ENCODE measurements at regions of chr14 and their contacts with region 1.

Region 1: GRCh38 chr14:49892636-49893308 is at the start of gene ARF6:
- DNase-seq: peak; percentile 98
- H3K4me3 Mint-ChIP-seq: peak within 1 kb of the TSS; percentile 100
- H3K27ac Mint-ChIP-seq: peak within 1 kb of the TSS; percentile 100
- H3K4me1 Mint-ChIP-seq: peaks cover 19% of the 10 kb centered on the region
- H3K27me3 Mint-ChIP-seq: no peaks in the 10 kb centered on the region
- total RNA-seq, gene ARF6: 128 to 129 TPM

Region 2: DNA sequence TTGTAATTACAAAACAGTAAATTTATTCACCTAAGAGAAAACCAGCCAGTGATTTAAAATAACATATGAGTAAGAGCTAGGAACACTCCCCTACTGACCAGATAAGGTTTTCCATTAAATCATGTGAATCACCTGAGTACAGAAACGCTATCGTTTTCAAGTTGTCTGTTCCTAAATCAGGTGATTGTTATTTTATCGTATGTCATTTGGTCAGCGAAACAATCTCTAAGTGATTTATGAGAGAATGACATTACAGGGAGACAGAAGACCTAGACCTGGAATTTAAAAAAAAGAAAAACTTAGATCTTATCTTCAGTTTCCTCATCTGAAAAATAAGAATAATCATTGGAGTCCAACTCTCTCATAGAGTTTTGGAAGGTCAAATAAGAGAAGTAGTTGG is 353.8 kb before region 1 on chr14:
- CTCF ChIA-PET with region 1: no interaction called
- intact Hi-C with region 1: no loop called
- DNase-seq: no peak
- H3K4me3 Mint-ChIP-seq: no peak overlapping the region
- H3K27ac Mint-ChIP-seq: no peak overlapping the region
- H3K4me1 Mint-ChIP-seq: no peaks in the 10 kb centered on the region
- H3K27me3 Mint-ChIP-seq: no peaks in the 10 kb centered on the region

Region 3: GRCh38 chr14:49879683-49880204 is 13.0 kb before region 1 on chr14:
- CTCF ChIA-PET with region 1: interaction called, 11 read pairs
- intact Hi-C with region 1: loop called (anchors 1 kb)
- DNase-seq: peak; percentile 79
- H3K4me3 Mint-ChIP-seq: no peak overlapping the region
- H3K27ac Mint-ChIP-seq: peak overlapping the region; percentile 30
- H3K4me1 Mint-ChIP-seq: peaks cover 17% of the 10 kb centered on the region
- H3K27me3 Mint-ChIP-seq: no peaks in the 10 kb centered on the region

Region 4: DNA sequence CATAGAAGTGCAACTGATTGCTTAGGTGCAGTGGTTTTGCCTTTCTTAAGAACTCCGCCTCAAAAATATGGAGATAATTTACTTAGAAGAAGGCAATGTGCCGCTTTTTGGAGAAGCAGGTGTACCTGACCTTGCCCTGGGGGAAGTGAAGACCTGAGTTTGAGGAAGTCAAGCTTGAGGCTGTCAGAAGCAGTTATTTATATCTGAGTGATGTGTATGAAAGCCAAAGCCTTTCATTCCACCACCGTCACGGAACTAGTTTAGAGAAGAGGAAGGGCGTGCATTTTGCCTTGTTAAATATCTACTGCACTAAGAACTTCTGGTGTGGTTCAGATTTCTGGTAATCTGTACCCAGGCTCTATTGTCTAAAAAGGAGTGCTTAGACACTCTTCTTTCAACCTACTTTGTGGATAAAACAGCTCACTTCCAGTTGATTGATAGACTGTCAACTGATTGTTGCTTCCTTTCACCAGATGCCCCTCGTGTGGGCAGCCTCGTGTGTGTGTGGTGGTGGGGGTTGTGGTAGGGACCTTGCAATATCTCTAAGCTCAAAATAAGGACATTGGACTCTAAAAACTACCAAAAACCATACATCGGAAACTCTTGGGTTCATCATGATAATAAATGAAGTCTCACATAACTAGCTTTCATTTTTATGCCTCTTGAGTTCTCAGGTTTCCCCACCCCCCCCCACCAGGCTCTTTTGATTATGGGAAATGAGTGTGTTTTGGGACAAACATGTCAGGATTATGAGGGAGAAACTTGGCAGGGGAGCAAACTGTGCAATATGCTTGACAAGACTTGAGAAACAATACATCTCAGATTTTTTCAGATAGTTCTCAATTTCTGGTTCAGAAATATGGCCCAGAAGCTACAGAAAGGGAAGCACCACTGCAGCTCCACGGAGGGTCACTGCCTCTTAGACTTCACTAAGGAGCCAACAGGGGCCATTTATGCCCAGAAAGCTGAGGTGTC is 78.7 kb after region 1 on chr14:
- CTCF ChIA-PET with region 1: interaction called, 5 read pairs
- intact Hi-C with region 1: loop called (anchors 1 kb)
- DNase-seq: peak; percentile 69
- H3K4me3 Mint-ChIP-seq: peak overlapping the region; percentile 73
- H3K27ac Mint-ChIP-seq: peak overlapping the region; percentile 97
- H3K4me1 Mint-ChIP-seq: peaks cover 59% of the 10 kb centered on the region
- H3K27me3 Mint-ChIP-seq: no peaks in the 10 kb centered on the region

Region 5: GRCh38 chr14:50018201-50018932 is 125.6 kb after region 1 on chr14:
- CTCF ChIA-PET with region 1: no interaction called
- intact Hi-C with region 1: no loop called
- DNase-seq: no peak
- H3K4me3 Mint-ChIP-seq: no peak overlapping the region
- H3K27ac Mint-ChIP-seq: no peak overlapping the region
- H3K4me1 Mint-ChIP-seq: peaks cover 49% of the 10 kb centered on the region
- H3K27me3 Mint-ChIP-seq: no peaks in the 10 kb centered on the region

Region 6: GRCh38 chr14:50109342-50109741 is 216.6 kb after region 1 on chr14:
- CTCF ChIA-PET with region 1: interaction called, 4 read pairs
- intact Hi-C with region 1: loop called (anchors 2 kb)
- DNase-seq: no peak
- H3K4me3 Mint-ChIP-seq: no peak overlapping the region
- H3K27ac Mint-ChIP-seq: peak overlapping the region; percentile 59
- H3K4me1 Mint-ChIP-seq: peaks cover 43% of the 10 kb centered on the region
- H3K27me3 Mint-ChIP-seq: no peaks in the 10 kb centered on the region